Activated naive CD8-positive, alpha-beta T cell treated with anti-CD3 and anti-CD28 coated beads, Interleukin-2, amount 10 ng/mL, durations not matched to agents 7 days and 5 days (primary cell): ENCODE measurements at regions of chr1 and their contacts with region 1.

Region 1: GRCh38 chr1:26889551-26890466 is at the start of gene GPN2:
- DNase-seq: peak; percentile 81
- ATAC-seq: peak; percentile 95
- H3K4me3 Mint-ChIP-seq: peak within 1 kb of the TSS; percentile 96
- H3K27ac Mint-ChIP-seq: peak within 1 kb of the TSS; percentile 92
- H3K4me1 Mint-ChIP-seq: peaks cover 27% of the 10 kb centered on the region
- H3K27me3 Mint-ChIP-seq: no peaks in the 10 kb centered on the region
- total RNA-seq, gene GPN2: 30.1 to 31.2 TPM

Region 2: GRCh38 chr1:26900001-26900814 is 10.4 kb after region 1 on chr1 and contains the start of gene GPATCH3:
- POLR2A ChIA-PET with region 1: interaction called, 57 read pairs
- DNase-seq: peak; percentile 85
- ATAC-seq: peak; percentile 87
- H3K4me3 Mint-ChIP-seq: peak within 1 kb of the TSS; percentile 98
- H3K27ac Mint-ChIP-seq: peak within 1 kb of the TSS; percentile 98
- H3K4me1 Mint-ChIP-seq: peaks cover 23% of the 10 kb centered on the region
- H3K27me3 Mint-ChIP-seq: no peaks in the 10 kb centered on the region
- total RNA-seq, gene GPATCH3: 17.3 to 19.6 TPM

Region 3: GRCh38 chr1:26921540-26922430 is 32.0 kb after region 1 on chr1 and contains the start of gene NUDC:
- POLR2A ChIA-PET with region 1: interaction called, 12 read pairs
- DNase-seq: peak; percentile 96
- ATAC-seq: peak; percentile 97
- H3K4me3 Mint-ChIP-seq: peak within 1 kb of the TSS; percentile 91
- H3K27ac Mint-ChIP-seq: peak within 1 kb of the TSS; percentile 91
- H3K4me1 Mint-ChIP-seq: peaks cover 24% of the 10 kb centered on the region
- H3K27me3 Mint-ChIP-seq: no peaks in the 10 kb centered on the region
- total RNA-seq, gene NUDC: 59.0 to 59.1 TPM